Lower leg skin (tissue), 4 donors: ENCODE measurements at regions of chrX and their contacts with region 1.

Region 1: DNA sequence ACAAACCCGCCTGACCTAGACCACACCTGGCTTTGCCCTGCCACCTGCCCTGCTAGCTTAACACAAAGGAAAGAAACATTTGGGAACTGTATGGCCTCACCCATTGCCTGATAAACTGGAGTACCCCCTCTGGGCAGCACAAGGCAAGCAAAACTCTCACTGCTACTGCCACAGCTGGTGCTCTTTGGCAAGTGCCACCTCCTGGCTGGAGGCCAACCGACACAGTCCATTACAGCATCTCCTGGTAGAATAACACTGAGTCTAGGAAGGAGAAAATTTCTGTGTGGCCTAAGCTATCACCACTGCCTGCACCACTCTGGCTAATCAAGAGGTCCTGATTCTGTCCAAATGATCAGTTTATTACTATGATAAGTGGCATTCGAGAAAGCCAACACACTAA is 18.9 kb upstream of the SPANXN3 start:
- DNase-seq: no peak
- H3K4me3 ChIP-seq: no peak overlapping the region
- CTCF ChIP-seq: no peak
- POLR2A ChIP-seq: no peak

Region 2: GRCh38 chrX:143306991-143307937 is 228.9 kb before region 1 on chrX:
- intact Hi-C with region 1: loop called (anchors 5 kb)
- DNase-seq: no peak
- H3K4me3 ChIP-seq: no peak overlapping the region
- CTCF ChIP-seq: no peak
- POLR2A ChIP-seq: no peak

Region 3: DNA sequence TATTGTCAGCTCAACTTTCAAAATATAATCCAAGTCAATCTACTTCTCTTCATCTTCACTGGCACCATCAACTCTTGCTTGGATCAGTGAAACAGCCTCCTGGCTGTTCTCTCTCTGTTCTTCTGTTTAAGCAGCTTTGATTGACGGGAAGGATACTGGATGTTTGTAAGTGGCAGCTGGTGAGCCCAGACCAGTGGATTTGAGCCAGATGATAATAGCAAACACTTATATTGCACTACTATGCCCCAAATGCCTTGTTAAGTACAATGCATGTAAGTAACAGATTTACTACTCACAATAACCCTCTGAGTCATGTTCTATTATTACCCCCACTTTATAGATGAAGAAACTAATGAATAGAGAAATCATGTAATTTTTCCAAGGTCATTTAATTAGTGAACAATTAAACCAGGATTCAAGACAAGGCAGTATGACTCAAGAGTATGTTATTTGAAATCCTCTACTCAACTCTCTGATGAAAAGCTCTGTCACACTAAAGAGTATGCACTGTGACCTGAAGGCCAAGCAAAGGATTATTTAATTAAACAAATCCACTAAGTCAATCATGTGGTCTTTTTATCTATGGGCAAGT is 63.7 kb before region 1 on chrX:
- intact Hi-C with region 1: no loop called
- DNase-seq: no peak
- H3K4me3 ChIP-seq: no peak overlapping the region
- CTCF ChIP-seq: no peak
- POLR2A ChIP-seq: no peak

Region 4: DNA sequence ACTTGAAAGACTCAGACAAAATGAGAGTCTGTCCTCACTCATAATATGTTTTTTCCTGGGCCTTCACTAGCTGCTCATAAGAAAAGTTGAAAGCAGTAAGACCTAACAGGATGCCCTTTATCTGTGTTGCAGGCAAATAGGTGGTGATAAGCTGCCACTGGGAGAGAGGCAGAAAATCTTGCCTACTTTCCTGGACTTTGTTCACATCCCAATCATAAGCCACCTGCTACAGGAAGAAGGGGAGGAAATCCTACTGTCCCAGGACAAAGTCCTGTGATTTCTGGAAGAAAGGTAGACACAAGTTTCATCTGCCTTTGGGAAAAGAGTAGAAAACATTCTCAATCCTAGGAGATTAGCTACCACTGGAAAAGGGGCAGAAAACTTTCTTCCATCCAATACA is 197.7 kb after region 1 on chrX:
- intact Hi-C with region 1: no loop called
- DNase-seq: no peak
- H3K4me3 ChIP-seq: no peak overlapping the region
- CTCF ChIP-seq: no peak
- POLR2A ChIP-seq: no peak